PC-3 (cell line): ENCODE measurements at regions of chr4 and their contacts with region 1.

Region 1: GRCh38 chr4:17810260-17811077 is at the starts of genes DCAF16 and NCAPG:
- DNase-seq: peak; percentile 98
- ATAC-seq: peak; percentile 83
- H3K4me3 ChIP-seq: peak within 1 kb of the TSS; percentile 99
- H3K27ac ChIP-seq: peak within 1 kb of the TSS; percentile 76
- H3K4me1 ChIP-seq: peaks cover 23% of the 10 kb centered on the region
- H3K27me3 ChIP-seq: no peaks in the 10 kb centered on the region
- CTCF ChIP-seq: no peak
- total RNA-seq, gene DCAF16: 25.5 and 26.1 TPM in 2 replicates
- total RNA-seq, gene NCAPG: 25.9 and 27.6 TPM in 2 replicates

Region 2: GRCh38 chr4:17544205-17544604 is 266.3 kb before region 1 on chr4:
- CTCF ChIA-PET with region 1: no interaction called
- POLR2A ChIA-PET with region 1: no interaction called
- intact Hi-C with region 1: loop called (anchors 2 kb)
- DNase-seq: peak; percentile 42
- ATAC-seq: peak; percentile 76
- H3K4me3 ChIP-seq: no peak overlapping the region
- H3K27ac ChIP-seq: no peak overlapping the region
- H3K4me1 ChIP-seq: peaks cover 2% of the 10 kb centered on the region; the same call in 1 of the 2 replicates
- H3K27me3 ChIP-seq: no peaks in the 10 kb centered on the region
- CTCF ChIP-seq: no peak

Region 3: DNA sequence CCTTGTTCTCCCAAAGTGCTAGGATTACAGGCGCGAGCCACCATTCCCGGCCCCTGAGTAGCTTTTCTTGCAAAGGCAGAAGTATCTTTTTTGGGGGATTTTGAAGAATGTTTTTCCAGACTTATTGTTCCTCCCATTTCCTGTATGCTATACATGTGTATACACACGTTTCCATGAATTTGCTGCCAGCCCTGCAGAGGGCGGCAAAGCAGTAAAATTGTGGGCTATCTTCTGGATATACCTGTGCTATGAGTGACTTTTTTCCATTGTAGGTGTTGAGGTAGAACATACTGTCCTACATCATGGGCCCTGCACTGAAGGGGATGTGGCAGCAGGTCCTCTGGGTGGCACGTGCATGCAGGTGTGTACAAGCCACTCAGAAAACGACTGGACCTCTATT is 213.0 kb before region 1 on chr4:
- CTCF ChIA-PET with region 1: no interaction called
- POLR2A ChIA-PET with region 1: no interaction called
- intact Hi-C with region 1: loop called (anchors 2 kb)
- DNase-seq: peak; percentile 51
- ATAC-seq: peak; percentile 84
- H3K4me3 ChIP-seq: no peak overlapping the region
- H3K27ac ChIP-seq: no peak overlapping the region
- H3K4me1 ChIP-seq: no peaks in the 10 kb centered on the region
- H3K27me3 ChIP-seq: no peaks in the 10 kb centered on the region
- CTCF ChIP-seq: peak; percentile 65

Region 4: GRCh38 chr4:17614416-17615299 is 195.8 kb before region 1 on chr4 and contains the start of gene MED28:
- CTCF ChIA-PET with region 1: no interaction called
- POLR2A ChIA-PET with region 1: no interaction called
- intact Hi-C with region 1: loop called (anchors 5 kb)
- DNase-seq: peak; percentile 90
- ATAC-seq: peak; percentile 80
- H3K4me3 ChIP-seq: peak within 1 kb of the TSS; percentile 98
- H3K27ac ChIP-seq: peak within 1 kb of the TSS; percentile 85
- H3K4me1 ChIP-seq: peaks cover 12% of the 10 kb centered on the region
- H3K27me3 ChIP-seq: no peaks in the 10 kb centered on the region
- CTCF ChIP-seq: no peak
- total RNA-seq, gene MED28: 4.4 and 11.6 TPM in 2 replicates

Region 5: DNA sequence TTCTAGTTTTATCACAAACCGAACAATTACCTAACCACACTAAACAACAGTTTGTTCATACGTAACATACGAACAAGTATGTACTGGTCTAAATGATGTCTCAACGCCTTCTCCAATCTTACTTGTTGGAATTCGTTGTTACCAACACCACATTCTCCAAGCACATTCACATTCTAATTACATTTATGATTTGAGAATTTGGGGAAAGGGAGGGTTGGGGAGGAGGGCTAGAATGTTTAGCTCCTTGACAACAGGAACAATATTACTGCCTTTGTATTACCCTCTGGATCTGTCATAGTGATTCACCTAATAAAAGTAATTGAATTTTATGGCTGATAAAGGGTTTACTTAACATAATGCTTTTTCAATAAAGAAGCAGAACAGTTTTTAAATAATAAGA is 186.7 kb after region 1 on chr4:
- CTCF ChIA-PET with region 1: no interaction called
- POLR2A ChIA-PET with region 1: no interaction called
- intact Hi-C with region 1: loop called (anchors 10 kb)
- DNase-seq: no peak
- ATAC-seq: peak; percentile 55
- H3K4me3 ChIP-seq: no peak overlapping the region
- H3K27ac ChIP-seq: no peak overlapping the region
- H3K4me1 ChIP-seq: no peaks in the 10 kb centered on the region
- H3K27me3 ChIP-seq: no peaks in the 10 kb centered on the region
- CTCF ChIP-seq: no peak

Region 6: GRCh38 chr4:18021722-18022571 is 211.5 kb after region 1 on chr4 and contains the start of gene LCORL:
- CTCF ChIA-PET with region 1: no interaction called
- POLR2A ChIA-PET with region 1: no interaction called
- intact Hi-C with region 1: loop called (anchors 1 kb)
- DNase-seq: peak; percentile 91
- ATAC-seq: peak; percentile 81
- H3K4me3 ChIP-seq: peak within 1 kb of the TSS; percentile 98
- H3K27ac ChIP-seq: peak within 1 kb of the TSS; percentile 43
- H3K4me1 ChIP-seq: peaks cover 5% of the 10 kb centered on the region; the same call in 1 of the 2 replicates
- H3K27me3 ChIP-seq: no peaks in the 10 kb centered on the region
- CTCF ChIP-seq: no peak
- total RNA-seq, gene LCORL: 2.9 and 3.7 TPM in 2 replicates